ENCODE measurements at regions of chr19 and their contacts with region 1.

Region 1: GRCh38 chr19:18846862-18847548 is 15.2 kb downstream of the UPF1 start:
- DNase-seq: peak; percentile 61 to 98 (median 84)

Region 2: DNA sequence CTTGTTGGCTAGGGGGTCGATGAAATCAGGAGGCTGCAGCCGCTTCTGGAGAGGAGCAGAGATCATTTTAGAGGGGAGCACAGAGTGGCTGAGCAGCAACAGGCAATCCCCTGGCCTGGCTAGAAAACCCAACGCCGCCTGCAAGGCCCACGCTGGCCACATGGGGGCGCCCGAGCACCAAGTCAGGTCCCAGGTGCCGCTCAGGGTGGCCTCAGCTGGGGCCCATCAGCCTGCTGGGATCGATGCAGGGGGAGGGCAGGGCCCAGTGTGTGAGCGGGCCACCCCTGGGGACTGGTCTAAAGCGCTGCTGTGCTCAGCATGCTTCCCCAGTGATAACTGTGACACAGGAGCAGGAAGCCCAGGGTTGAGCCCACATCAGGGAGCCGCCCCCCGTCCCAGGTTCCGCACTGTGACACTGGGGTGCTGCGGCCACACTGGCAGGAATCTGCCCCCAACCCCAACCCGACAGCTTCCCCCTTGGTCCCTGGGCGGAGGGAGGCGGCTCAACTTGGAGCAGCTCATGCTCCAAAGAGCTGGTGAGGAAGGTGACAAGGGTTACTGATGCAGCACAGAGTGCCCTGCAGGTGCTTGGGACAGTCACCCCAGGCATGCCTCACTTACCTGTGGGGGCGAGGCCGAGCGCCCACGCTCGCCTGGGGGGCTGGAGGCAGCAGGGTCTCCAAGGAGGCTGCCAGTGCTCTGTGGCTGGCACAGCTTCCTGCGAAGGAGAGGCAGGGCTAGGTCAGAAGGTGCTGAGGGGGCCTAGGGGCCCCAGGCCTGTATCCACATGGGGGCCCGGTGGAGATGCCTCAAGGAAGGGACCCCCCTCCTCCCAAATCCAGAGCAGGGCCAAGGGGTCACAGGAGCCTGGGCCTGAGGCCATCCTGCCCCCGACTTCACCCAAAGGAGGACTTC is 395.8 kb before region 1 on chr19:
- intact Hi-C with region 1: loop called (anchors 10 kb)
- DNase-seq: peak; percentile 78 to 98 (median 94)

Region 3: DNA sequence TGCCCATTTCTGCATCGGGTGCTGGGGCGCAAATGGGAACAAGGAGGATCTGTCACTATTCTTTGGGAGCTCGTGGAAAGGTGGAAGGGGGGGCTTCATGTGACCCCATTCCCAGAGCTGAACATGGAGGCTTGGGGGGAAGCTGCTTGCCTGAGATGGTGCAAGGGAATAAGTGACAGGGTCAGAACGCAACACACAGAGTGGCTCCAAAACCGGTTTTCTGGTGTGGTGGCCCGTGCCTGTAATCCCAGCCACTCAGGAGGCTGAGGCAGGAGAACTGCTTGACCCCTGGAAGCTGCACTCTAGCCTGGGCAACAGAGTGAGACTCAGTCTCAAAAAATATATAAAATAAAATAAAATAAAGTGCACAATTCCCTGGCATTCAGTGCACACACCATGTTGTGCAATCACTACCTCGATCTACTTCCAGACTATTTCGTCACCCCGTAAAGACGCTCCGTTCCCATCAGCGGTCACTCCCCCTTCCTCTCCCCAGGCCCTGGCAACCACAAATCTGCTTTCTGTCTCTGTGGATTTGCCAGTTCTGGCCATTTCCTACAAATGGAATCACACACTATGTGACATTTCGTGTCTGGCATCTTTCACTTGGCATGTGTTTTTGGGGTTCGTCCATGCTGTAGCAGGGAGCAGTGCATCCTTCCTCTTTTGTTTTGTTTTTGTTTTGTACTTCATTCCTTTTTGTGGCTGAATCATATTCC is 37.7 kb before region 1 on chr19:
- intact Hi-C with region 1: no loop called
- DNase-seq: peak in 1 of 10 donors; percentile 65

Measured in posterior cingulate gyrus (tissue), 11 donors.